ENCODE measurements at regions of chr5 and their contacts with region 1.

Region 1: GRCh38 chr5:171709918-171710317 is 75.7 kb upstream of the SMIM23 start:
- DNase-seq: no peak
- H3K4me3 ChIP-seq: no peak overlapping the region
- H3K27ac ChIP-seq: no peak overlapping the region
- H3K4me1 ChIP-seq: no peaks in the 10 kb centered on the region
- H3K27me3 ChIP-seq: no peaks in the 10 kb centered on the region
- CTCF ChIP-seq: no peak

Region 2: GRCh38 chr5:171688696-171689495 is 21.0 kb before region 1 on chr5:
- CTCF ChIA-PET with region 1: no interaction called
- dilution Hi-C with region 1: no loop called
- in situ Hi-C with region 1: no loop called
- intact Hi-C with region 1: no loop called
- DNase-seq: no peak
- H3K4me3 ChIP-seq: no peak overlapping the region
- H3K27ac ChIP-seq: no peak overlapping the region
- H3K4me1 ChIP-seq: no peaks in the 10 kb centered on the region
- H3K27me3 ChIP-seq: peaks cover 2% of the 10 kb centered on the region
- CTCF ChIP-seq: no peak

Region 3: GRCh38 chr5:171745602-171746001 is 35.7 kb after region 1 on chr5:
- CTCF ChIA-PET with region 1: no interaction called
- dilution Hi-C with region 1: loop called (anchors 5 kb)
- in situ Hi-C with region 1: no loop called
- intact Hi-C with region 1: no loop called
- DNase-seq: no peak
- H3K4me3 ChIP-seq: no peak overlapping the region
- H3K27ac ChIP-seq: no peak overlapping the region
- H3K4me1 ChIP-seq: peaks cover 20% of the 10 kb centered on the region
- H3K27me3 ChIP-seq: no peaks in the 10 kb centered on the region
- CTCF ChIP-seq: no peak

Region 4: DNA sequence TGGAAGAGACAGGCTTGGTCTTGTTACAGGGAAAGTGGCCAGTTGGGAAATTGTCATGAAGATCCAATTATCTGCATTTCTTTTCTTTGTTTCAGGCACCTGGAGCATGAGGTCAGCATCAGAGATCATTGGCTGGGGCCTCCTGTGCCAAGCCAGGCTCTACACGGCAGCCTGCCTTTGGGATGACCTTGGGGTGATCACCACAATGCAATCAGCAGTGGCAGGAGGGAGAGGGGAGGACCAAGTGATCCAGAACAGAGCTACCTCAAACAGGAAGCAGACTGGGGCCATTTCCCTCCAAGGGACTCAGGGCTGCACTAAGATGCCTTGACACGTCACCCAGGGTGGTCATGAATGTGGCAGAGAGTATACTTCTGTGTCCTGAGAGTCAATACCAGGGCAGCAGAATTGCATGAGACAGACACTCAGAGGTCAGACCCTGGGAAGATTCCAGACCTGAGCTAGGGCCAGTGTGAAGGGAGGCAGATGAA is 84.6 kb after region 1 on chr5:
- CTCF ChIA-PET with region 1: no interaction called
- dilution Hi-C with region 1: loop called (anchors 5 kb)
- in situ Hi-C with region 1: no loop called
- intact Hi-C with region 1: no loop called
- DNase-seq: no peak
- H3K4me3 ChIP-seq: no peak overlapping the region
- H3K27ac ChIP-seq: no peak overlapping the region
- H3K4me1 ChIP-seq: no peaks in the 10 kb centered on the region
- H3K27me3 ChIP-seq: no peaks in the 10 kb centered on the region
- CTCF ChIP-seq: no peak